Aorta (tissue), 5 donors: ENCODE measurements at regions of chr1 and their contacts with region 1.

Region 1: DNA sequence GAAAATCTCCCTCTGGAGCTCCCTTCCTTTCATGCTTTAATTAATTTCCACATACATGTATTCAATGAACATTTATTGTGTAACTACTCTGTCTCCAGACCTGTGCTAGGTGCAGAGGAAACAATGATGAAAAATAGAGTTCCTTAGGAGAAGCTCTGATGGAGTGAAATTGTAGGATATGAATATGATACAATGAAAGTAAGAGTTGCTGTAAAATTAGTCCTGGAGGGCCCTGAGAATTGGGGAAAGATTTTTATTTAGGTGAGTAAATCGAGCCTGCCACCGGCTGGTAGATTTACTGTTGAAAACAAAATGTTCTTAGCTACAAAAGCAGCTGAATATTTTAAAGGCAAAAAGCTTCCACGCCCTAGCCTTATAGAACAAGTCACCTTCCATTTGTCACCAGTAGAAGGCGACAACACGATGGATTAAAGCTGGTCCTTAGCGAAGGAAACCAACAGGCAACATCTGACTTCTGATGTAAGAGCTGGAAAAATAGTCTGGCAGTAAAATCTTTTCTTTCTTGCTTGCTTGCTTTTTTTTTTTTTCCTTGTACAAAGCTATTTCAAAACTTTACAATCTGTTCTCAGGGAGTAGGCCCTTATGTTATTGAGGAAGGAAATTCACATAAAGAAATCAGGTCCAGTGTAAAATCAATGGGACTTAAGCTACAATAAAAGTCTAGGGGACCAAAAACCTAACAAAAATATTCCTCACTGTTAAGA is 82.0 kb upstream of the ROR1 start:
- DNase-seq: no peak
- ATAC-seq: peak; percentile 92
- H3K4me3 ChIP-seq: no peak overlapping the region
- H3K27ac ChIP-seq: peak overlapping the region in 1 of 2 donors; percentile 63
- H3K4me1 ChIP-seq: no peaks in the 10 kb centered on the region
- H3K27me3 ChIP-seq: no peaks in the 10 kb centered on the region

Region 2: GRCh38 chr1:63859480-63860270 is 167.8 kb after region 1 on chr1:
- intact Hi-C with region 1: loop called in 1 of 2 experiments (anchors 10 kb)
- DNase-seq: no peak
- ATAC-seq: no peak
- H3K4me3 ChIP-seq: no peak overlapping the region
- H3K27ac ChIP-seq: no peak overlapping the region
- H3K4me1 ChIP-seq: peaks cover 6 to 14% of the 10 kb centered on the region in 2 donors
- H3K27me3 ChIP-seq: no peaks in the 10 kb centered on the region

Region 3: GRCh38 chr1:63917571-63918417 is 225.9 kb after region 1 on chr1:
- intact Hi-C with region 1: loop called (anchors 5 to 10 kb)
- DNase-seq: no peak
- ATAC-seq: peak; percentile 33
- H3K4me3 ChIP-seq: no peak overlapping the region
- H3K27ac ChIP-seq: peak overlapping the region; percentile 29 to 98
- H3K4me1 ChIP-seq: peaks cover 7 to 9% of the 10 kb centered on the region in 2 donors
- H3K27me3 ChIP-seq: no peaks in the 10 kb centered on the region

Region 4: GRCh38 chr1:64136752-64137411 is 445.0 kb after region 1 on chr1:
- intact Hi-C with region 1: loop called (anchors 2 to 10 kb)
- DNase-seq: peak; percentile 73 to 86
- ATAC-seq: peak; percentile 93
- H3K4me3 ChIP-seq: no peak overlapping the region
- H3K27ac ChIP-seq: no peak overlapping the region
- H3K4me1 ChIP-seq: peaks cover 0 to 4% of the 10 kb centered on the region in 2 donors
- H3K27me3 ChIP-seq: no peaks in the 10 kb centered on the region

Region 5: GRCh38 chr1:64150266-64150665 is 458.4 kb after region 1 on chr1:
- intact Hi-C with region 1: loop called in 1 of 2 experiments (anchors 5 kb)
- DNase-seq: no peak
- ATAC-seq: no peak
- H3K4me3 ChIP-seq: no peak overlapping the region
- H3K27ac ChIP-seq: no peak overlapping the region
- H3K4me1 ChIP-seq: peaks cover 0 to 8% of the 10 kb centered on the region in 2 donors
- H3K27me3 ChIP-seq: no peaks in the 10 kb centered on the region

Region 6: GRCh38 chr1:64242895-64243756 is 551.3 kb after region 1 on chr1:
- intact Hi-C with region 1: loop called (anchors 5 kb)
- DNase-seq: no peak
- ATAC-seq: no peak
- H3K4me3 ChIP-seq: no peak overlapping the region
- H3K27ac ChIP-seq: no peak overlapping the region
- H3K4me1 ChIP-seq: no peaks in the 10 kb centered on the region
- H3K27me3 ChIP-seq: no peaks in the 10 kb centered on the region